IMR-90 (cell line): ENCODE measurements at regions of chr10 and their contacts with region 1.

Region 1: GRCh38 chr10:25094590-25094989 is 78.2 kb downstream of the THNSL1 start:
- DNase-seq: no peak
- ATAC-seq: no peak
- H3K4me3 ChIP-seq: no peak overlapping the region
- H3K27ac ChIP-seq: no peak overlapping the region
- H3K4me1 ChIP-seq: no peaks in the 10 kb centered on the region
- H3K27me3 ChIP-seq: no peaks in the 10 kb centered on the region
- CTCF ChIP-seq: no peak
- POLR2A ChIP-seq: no peak
- RAD21 ChIP-seq: no peak

Region 2: DNA sequence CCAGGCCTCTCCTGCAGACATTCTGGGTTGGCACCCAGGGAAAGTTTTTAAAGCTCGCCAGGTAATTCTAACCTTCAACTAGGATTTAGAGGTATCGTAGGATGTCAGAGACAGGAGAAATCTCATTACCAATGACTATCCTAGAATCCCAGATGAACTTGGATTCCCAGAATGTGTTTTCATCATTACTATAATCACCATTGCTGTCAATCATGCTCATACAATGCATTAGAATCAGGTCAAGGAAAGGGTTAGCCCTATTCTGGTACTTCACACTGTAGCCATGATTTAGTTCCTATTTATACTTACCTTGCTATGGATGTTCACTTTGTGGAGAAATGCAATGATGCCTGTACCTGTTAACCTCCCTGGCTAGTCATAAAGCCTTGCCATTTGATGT is 13.2 kb after region 1 on chr10:
- CTCF ChIA-PET with region 1: interaction called, 13 read pairs
- POLR2A ChIA-PET with region 1: no interaction called
- dilution Hi-C with region 1: no loop called
- in situ Hi-C with region 1: no loop called
- intact Hi-C with region 1: no loop called
- DNase-seq: no peak
- ATAC-seq: no peak
- H3K4me3 ChIP-seq: no peak overlapping the region
- H3K27ac ChIP-seq: no peak overlapping the region
- H3K4me1 ChIP-seq: no peaks in the 10 kb centered on the region
- H3K27me3 ChIP-seq: no peaks in the 10 kb centered on the region
- CTCF ChIP-seq: no peak
- POLR2A ChIP-seq: no peak
- RAD21 ChIP-seq: no peak

Region 3: GRCh38 chr10:25174461-25175230 is 80.1 kb after region 1 on chr10 and contains the start of gene GPR158:
- CTCF ChIA-PET with region 1: no interaction called
- POLR2A ChIA-PET with region 1: no interaction called
- dilution Hi-C with region 1: no loop called
- in situ Hi-C with region 1: no loop called
- intact Hi-C with region 1: no loop called
- DNase-seq: peak; percentile 85
- ATAC-seq: peak; percentile 98
- H3K4me3 ChIP-seq: peak within 1 kb of the TSS; percentile 46
- H3K27ac ChIP-seq: no peak within 1 kb of the TSS
- H3K4me1 ChIP-seq: no peaks in the 10 kb centered on the region
- H3K27me3 ChIP-seq: peaks cover 21% of the 10 kb centered on the region
- CTCF ChIP-seq: no peak
- POLR2A ChIP-seq: no peak
- RAD21 ChIP-seq: no peak
- total RNA-seq, gene GPR158: not detected in 2 replicates